Posterior vena cava (tissue), 2 donors: ENCODE measurements at regions of chr12 and their contacts with region 1.

Region 1: DNA sequence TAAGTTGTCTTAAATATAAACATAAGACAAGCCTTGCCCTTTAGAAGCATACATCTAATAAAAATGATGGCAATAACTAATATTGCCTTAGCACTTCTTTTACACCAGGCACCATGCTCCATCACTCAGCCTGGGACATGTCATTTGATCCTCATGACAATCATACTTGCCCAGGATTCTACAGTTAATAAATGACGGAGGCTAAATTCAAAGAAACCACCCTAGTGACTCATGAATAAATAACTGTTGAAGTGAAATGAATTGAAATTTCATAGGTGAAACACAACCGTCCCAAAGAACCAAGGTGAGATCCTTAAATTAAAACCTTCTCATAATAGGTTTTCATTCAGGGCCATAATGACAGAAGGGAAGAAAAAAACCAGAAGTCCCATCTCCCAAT is 89.5 kb downstream of the GRIN2B start:
- DNase-seq: no peak

Region 2: GRCh38 chr12:13358391-13358905 is 533.5 kb before region 1 on chr12:
- intact Hi-C with region 1: loop called in 1 of 2 experiments (anchors 5 kb)
- DNase-seq: no peak